ENCODE measurements at regions of chr2 and their contacts with region 1.

Region 1: GRCh38 chr2:186695081-186695756 is 1.4 kb downstream of the FAM171B start:
- DNase-seq: peak in 21 of 42 donors; percentile 4 to 67 (median 30)

Region 2: GRCh38 chr2:186589612-186590349 is 105.4 kb before region 1 on chr2 and contains the start of gene ITGAV:
- intact Hi-C with region 1: loop called (anchors 10 kb)
- DNase-seq: peak; percentile 64 to 96 (median 87)

Region 3: GRCh38 chr2:186653511-186653910 is 41.7 kb before region 1 on chr2:
- intact Hi-C with region 1: no loop called
- DNase-seq: no peak

Measured in head of caudate nucleus (tissue), 42 donors.